MCF 10A (cell line): ENCODE measurements at regions of chr19 and their contacts with region 1.

Region 1: GRCh38 chr19:39397360-39398296 is 6.5 kb downstream of the MED29 start:
- DNase-seq: peak; percentile 92
- H3K4me3 Mint-ChIP-seq: peak overlapping the region; percentile 10
- H3K27ac Mint-ChIP-seq: peak overlapping the region; percentile 92
- H3K4me1 Mint-ChIP-seq: peaks cover 40% of the 10 kb centered on the region
- H3K27me3 Mint-ChIP-seq: no peaks in the 10 kb centered on the region
- CTCF ChIP-seq: peak; percentile 98

Region 2: DNA sequence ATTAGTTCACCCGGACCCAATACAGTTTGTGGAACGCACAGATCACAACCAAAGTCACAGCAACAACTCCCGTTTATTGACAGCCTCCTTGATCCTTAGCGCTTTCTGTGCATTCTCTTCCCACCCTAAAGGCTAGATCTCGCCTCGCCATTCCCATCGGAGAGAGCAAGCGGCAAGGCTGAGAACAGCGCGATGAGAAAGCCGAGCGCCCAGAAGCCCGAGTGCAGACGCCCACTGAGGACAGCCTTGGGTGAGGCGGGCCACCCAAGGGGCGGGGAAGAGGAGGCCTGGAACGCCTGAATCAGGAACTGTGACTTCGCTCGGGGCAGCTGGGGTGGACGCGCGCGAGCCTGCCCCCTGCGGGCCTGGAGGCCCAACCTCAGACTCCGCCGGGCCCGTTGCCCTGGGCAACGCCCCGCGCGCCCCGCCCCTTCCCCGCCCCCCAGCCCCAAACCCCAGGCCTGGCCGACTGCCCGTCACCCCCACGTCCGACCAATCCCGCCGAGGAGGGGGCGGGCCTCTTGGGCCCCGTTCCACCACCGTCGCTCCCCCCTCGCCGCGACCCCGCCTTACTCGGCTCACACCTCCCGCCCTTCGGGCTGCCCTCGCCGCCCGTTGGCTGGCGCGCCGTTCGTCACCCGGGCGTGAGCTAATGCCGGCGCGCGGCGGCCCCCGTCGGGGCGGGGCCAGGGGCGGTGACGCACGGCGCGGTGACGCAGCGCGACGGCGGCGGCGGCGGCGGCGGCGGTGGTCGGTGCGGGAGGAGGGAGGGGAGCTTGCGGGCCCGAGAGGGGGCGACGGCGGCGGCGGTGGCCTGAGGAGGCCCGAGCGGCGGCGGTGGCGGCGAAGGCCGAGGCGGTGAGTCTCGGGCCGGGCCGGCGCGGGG is 55.7 kb before region 1 on chr19 and contains the start of gene SAMD4B:
- CTCF ChIA-PET with region 1: interaction called, 5 read pairs
- POLR2A ChIA-PET with region 1: interaction called, 11 read pairs
- intact Hi-C with region 1: loop called (anchors 5 kb)
- DNase-seq: peak; percentile 98
- H3K4me3 Mint-ChIP-seq: peak within 1 kb of the TSS; percentile 100
- H3K27ac Mint-ChIP-seq: peak within 1 kb of the TSS; percentile 97
- H3K4me1 Mint-ChIP-seq: peaks cover 48% of the 10 kb centered on the region
- H3K27me3 Mint-ChIP-seq: no peaks in the 10 kb centered on the region
- CTCF ChIP-seq: peak; percentile 79
- total RNA-seq, gene SAMD4B: 65.4 and 94.2 TPM in 2 replicates